ENCODE measurements at regions of chr1 and their contacts with region 1.

Region 1: GRCh38 chr1:206734499-206735142 is 36.0 kb upstream of the IL19 start:
- DNase-seq: peak; percentile 74
- ATAC-seq: peak; percentile 69
- H3K4me3 Mint-ChIP-seq: no peak overlapping the region
- H3K27ac Mint-ChIP-seq: peak overlapping the region; percentile 24
- H3K4me1 Mint-ChIP-seq: peaks cover 43% of the 10 kb centered on the region
- H3K27me3 Mint-ChIP-seq: no peaks in the 10 kb centered on the region
- CTCF ChIP-seq: peak; percentile 41

Region 2: DNA sequence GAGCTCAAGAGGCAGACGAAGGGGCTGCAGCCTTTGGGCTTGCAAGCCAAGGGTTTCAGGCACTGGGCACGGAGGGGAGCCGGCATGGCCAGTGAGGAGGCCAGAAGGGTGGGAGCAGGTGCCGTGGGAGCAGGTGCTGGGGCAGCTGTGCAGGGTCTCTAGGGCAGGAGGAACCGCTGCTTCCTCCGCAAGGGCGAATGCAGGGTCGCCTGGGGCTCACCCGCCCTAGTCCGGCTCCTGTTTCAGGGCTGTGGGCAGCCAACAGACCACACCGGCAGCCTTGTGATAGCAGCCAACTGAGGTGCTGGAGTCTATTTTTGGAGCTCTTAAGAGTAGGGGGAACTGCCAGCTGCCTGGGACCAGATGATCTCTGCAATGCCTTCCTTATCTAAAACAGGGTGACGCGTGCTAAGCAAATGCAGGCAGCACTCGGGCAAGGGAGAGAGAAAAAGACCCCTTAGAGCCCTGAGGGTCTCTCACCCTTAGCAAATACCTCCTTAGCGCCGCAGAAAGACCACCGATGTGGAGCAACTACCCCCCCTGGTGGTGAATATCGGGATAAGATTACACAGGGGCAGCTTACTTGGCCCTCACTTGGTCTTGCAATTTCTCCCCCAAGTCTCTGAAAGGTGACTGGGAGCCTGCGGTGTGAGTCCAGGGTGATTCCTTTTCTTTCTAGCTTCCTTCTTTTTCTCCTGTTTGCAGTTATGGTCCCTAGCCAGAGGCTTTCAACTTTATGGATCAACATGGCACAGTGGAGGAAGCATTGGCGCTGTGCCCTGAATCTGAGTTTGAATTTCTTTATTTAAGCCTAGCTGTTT is 70.6 kb before region 1 on chr1:
- CTCF ChIA-PET with region 1: interaction called, 40 read pairs
- POLR2A ChIA-PET with region 1: no interaction called
- intact Hi-C with region 1: no loop called
- DNase-seq: peak; percentile 49
- ATAC-seq: peak; percentile 89
- H3K4me3 Mint-ChIP-seq: peak overlapping the region; percentile 47
- H3K27ac Mint-ChIP-seq: no peak overlapping the region
- H3K4me1 Mint-ChIP-seq: peaks cover 16% of the 10 kb centered on the region
- H3K27me3 Mint-ChIP-seq: peaks cover 17% of the 10 kb centered on the region
- CTCF ChIP-seq: peak; percentile 62

Region 3: DNA sequence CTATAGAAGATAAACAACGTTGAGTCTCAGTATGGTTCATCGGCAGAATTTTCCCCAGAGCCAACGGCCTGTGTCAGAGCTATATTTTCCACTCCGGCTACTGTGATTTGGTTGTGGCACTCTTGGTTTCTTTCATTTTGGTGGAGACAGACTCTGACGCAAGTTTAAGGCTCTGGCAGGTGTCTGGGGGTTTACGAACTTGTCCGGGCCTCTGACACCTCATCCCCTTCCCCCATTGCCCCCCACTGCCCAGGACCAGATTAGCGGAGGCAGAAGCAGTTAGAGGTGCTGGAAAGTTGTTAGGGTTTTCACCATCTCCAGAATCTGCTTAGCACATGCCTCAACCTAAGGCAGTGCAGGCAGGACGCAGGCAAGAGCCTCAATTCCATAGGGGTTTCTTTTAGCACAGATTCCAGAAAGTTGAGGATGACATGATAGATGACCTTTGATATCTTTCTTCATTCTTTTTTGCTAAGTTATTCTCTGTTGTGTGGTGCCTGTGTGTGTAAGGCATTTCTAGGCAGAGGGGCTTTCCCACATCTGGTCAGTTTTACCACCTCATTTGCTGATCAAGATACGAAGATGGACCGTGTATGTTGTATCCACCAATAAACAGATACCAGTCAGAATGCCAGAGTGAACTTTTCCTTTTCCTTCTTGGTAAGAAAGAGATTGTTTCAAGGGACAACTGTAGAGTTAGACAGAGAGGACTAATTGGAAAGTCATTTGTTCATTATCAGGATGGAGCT is 56.1 kb after region 1 on chr1:
- CTCF ChIA-PET with region 1: interaction called, 17 read pairs
- POLR2A ChIA-PET with region 1: interaction called, 9 read pairs
- intact Hi-C with region 1: loop called (anchors 1 kb)
- DNase-seq: no peak
- ATAC-seq: peak; percentile 59
- H3K4me3 Mint-ChIP-seq: peak overlapping the region; percentile 78
- H3K27ac Mint-ChIP-seq: peak overlapping the region; percentile 94
- H3K4me1 Mint-ChIP-seq: peaks cover 76% of the 10 kb centered on the region
- H3K27me3 Mint-ChIP-seq: no peaks in the 10 kb centered on the region
- CTCF ChIP-seq: no peak

Region 4: DNA sequence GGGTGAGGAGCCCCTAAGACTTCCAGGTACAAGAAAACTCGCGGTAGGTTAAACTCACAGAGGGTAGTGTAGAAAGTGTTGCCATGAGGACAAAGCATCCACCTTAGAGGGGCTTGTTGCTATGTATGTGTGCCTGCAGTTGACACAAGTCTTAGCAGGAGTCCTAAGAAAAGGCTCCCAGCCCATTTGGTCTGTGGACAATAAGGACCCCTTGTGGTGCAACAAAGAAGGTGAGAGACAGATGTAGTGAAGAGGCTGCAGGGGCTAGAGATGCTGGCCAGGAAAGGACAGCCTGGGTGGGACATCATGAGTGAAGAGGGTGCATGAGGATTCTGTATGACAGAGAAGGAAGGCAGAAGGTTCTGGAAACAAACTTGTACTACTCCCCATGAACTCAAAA is 74.0 kb after region 1 on chr1:
- CTCF ChIA-PET with region 1: interaction called, 252 read pairs
- POLR2A ChIA-PET with region 1: interaction called, 18 read pairs
- intact Hi-C with region 1: loop called (anchors 1 kb)
- DNase-seq: no peak
- ATAC-seq: peak; percentile 94
- H3K4me3 Mint-ChIP-seq: no peak overlapping the region
- H3K27ac Mint-ChIP-seq: no peak overlapping the region
- H3K4me1 Mint-ChIP-seq: peaks cover 32% of the 10 kb centered on the region
- H3K27me3 Mint-ChIP-seq: no peaks in the 10 kb centered on the region
- CTCF ChIP-seq: no peak

Region 5: DNA sequence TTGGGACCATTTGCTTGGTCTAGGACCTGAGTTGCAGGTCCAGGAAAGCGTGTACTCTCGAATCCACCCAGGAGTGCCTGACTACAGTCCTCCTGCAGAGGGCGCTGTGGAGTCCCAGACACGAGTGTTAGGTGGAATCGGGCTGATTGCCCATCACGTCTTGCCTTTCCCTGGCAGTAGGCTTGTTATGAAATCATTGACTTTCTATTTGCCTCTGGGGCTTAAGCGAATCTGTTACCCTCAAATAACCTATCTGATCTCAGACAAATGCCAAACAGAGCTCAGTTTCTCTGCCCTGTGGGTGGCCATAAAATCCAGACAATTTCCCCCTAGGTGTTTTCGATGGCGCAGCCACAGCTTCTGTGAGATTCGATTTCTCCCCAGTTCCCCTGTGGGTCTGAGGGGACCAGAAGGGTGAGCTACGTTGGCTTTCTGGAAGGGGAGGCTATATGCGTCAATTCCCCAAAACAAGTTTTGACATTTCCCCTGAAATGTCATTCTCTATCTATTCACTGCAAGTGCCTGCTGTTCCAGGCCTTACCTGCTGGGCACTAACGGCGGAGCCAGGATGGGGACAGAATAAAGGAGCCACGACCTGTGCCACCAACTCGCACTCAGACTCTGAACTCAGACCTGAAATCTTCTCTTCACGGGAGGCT is 130.5 kb after region 1 on chr1 and contains the start of gene IL20:
- CTCF ChIA-PET with region 1: interaction called, 5 read pairs
- POLR2A ChIA-PET with region 1: no interaction called
- intact Hi-C with region 1: loop called (anchors 1 kb)
- DNase-seq: peak; percentile 72
- ATAC-seq: peak; percentile 90
- H3K4me3 Mint-ChIP-seq: no peak within 1 kb of the TSS
- H3K27ac Mint-ChIP-seq: no peak within 1 kb of the TSS
- H3K4me1 Mint-ChIP-seq: peaks cover 6% of the 10 kb centered on the region
- H3K27me3 Mint-ChIP-seq: peaks cover 26% of the 10 kb centered on the region
- CTCF ChIP-seq: peak; percentile 43
- total RNA-seq, gene IL20: not detected in 2 replicates

Region 6: DNA sequence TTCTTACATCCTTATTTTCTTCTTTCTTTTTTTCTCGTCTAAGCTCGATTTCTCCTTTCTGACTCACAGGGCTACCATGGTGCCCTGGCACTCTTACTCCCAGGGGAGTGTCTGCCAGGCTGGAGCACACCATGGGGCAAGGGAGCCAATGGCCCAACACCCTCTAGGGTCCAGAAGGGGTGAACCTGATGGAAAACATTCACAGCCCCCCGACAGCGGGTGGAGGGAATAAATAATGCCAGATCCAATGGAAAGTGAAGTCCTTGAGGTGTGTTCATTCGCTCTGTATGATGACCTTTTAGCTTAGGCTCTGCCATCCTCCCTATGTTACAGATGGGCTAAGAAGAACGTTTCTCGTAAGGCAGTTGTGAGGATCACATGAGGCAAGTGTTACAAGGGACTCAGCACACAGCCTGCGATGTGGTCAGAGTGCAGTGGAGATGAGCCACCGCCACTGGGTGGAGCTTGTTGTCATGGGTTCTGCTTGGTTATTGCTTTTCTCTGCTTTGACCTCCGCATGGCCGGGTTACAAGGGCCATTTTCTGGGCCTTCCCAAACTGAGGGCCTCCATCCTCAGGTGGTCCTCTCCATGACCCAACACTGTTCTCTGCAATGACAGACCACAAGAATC is 190.6 kb after region 1 on chr1:
- CTCF ChIA-PET with region 1: interaction called, 41 read pairs
- POLR2A ChIA-PET with region 1: interaction called, 4 read pairs
- intact Hi-C with region 1: no loop called
- DNase-seq: peak; percentile 63
- ATAC-seq: peak; percentile 55
- H3K4me3 Mint-ChIP-seq: no peak overlapping the region
- H3K27ac Mint-ChIP-seq: no peak overlapping the region
- H3K4me1 Mint-ChIP-seq: peaks cover 33% of the 10 kb centered on the region
- H3K27me3 Mint-ChIP-seq: no peaks in the 10 kb centered on the region
- CTCF ChIP-seq: no peak

Measured in activated B cell treated with CpG ODN at 0.5 μM for 24 hours (primary cell).